Activated naive CD4-positive, alpha-beta T cell treated with anti-CD3 and anti-CD28 coated beads for 36 hours (primary cell): ENCODE measurements at regions of chr1 and their contacts with region 1.

Region 1: DNA sequence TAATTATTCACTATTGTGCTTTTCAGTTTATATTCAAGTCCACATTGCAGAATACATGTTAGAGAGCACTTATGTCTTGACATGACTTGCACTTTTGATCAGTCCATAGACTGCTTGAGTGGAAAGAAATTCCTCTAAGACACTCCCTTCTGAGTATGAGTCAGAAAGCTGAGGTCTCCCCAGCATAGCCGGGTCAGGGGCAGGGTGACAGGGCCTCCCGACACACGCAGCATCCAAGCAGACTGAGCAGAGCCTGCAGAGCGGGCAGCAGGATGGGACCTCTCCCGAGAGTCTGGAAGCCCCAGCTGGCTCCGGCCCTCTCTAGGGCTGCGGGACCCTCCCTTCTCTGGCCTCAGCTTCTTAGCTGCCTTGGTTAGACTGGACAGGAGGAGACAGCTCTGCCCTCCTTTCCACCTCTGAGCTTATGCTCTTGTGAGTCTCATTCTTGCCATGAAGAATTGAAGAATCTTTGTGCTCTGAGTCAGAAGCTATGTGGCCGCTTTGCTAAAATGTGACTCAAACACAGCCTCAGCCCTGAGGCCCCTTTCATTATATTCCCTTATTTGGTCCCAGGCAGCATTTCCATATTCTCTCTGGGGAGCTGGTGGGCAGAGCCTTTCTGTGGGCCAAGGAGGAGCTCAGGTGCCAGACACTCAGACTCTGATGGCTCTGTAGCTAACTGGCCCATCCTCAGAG is 11.2 kb upstream of the CAPN2 start:
- DNase-seq: peak; percentile 29
- H3K4me3 Mint-ChIP-seq: no peak overlapping the region
- H3K27ac Mint-ChIP-seq: no peak overlapping the region
- H3K4me1 Mint-ChIP-seq: peaks cover 29% of the 10 kb centered on the region
- H3K27me3 Mint-ChIP-seq: no peaks in the 10 kb centered on the region

Region 2: DNA sequence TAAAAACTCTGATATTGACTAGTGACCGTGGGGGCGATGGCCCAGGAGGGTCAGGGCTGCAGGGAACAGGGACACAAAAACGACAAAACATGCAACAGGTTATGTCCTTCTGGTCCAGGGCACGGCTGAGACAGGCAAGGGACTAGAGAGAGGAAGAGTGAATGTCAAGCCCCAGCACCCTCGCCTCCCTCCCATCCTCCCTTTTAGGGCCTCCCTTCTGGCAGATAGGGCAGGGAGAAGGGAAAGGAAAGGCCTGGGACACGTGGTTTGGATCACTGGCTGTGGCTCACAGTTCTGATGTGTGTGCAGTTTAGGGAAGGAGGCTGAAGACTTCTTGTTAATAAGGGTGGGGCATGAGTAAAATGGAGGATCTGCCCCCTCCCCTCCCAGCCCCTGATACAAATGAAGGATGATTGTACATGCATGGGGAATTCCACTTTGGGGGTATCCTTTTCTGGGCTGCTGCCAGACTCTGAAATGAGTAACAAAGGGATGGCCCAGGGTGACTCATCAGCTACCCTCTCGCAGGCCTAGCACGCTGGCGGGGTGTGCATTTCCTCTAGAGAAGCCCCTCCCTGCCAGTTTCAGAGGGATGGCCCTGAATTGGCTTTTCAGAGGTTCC is 25.4 kb after region 1 on chr1:
- CTCF ChIA-PET with region 1: interaction called, 7 read pairs
- intact Hi-C with region 1: loop called (anchors 1 kb)
- DNase-seq: peak; percentile 98
- H3K4me3 Mint-ChIP-seq: peak overlapping the region; percentile 52
- H3K27ac Mint-ChIP-seq: peak overlapping the region; percentile 65
- H3K4me1 Mint-ChIP-seq: peaks cover 57% of the 10 kb centered on the region
- H3K27me3 Mint-ChIP-seq: no peaks in the 10 kb centered on the region

Region 3: DNA sequence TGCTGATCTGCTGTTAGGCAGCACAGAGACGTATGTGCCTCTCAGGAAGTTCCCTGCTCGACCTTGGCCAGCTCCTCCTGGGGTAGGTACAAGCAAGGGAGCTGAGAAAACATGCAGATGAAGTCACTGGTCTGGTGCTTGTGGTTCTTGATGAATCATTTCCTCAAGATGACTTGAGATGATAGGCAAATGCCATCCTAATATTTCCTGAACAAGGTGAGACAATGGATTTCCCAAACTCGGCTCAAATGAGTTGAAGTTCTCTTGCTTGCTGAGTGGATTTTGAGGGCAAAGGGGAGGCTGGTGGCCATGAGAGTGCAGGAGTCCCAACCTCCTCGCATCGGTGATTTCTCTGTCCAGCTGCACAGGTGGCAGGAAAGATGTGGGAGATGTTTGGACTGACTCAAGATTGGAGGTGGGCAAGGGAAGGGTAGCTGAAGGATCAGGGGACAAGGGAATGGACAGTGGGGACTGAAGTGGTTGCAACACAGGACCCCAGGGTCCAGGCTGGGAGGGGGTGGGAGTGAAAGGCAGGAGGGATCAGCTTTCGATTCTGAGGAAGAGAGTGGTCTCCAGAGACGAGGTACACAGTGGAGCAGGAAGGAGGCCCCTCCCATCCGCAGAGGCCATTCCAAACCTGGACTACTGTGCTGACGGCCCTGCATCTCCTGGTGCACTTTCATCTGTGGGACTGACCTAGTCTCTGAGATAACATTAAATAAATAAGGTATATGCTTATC is 75.2 kb after region 1 on chr1:
- CTCF ChIA-PET with region 1: interaction called, 10 read pairs
- intact Hi-C with region 1: loop called (anchors 2 kb)
- DNase-seq: peak; percentile 83
- H3K4me3 Mint-ChIP-seq: peak overlapping the region; percentile 10
- H3K27ac Mint-ChIP-seq: peak overlapping the region; percentile 86
- H3K4me1 Mint-ChIP-seq: peaks cover 41% of the 10 kb centered on the region
- H3K27me3 Mint-ChIP-seq: no peaks in the 10 kb centered on the region

Region 4: DNA sequence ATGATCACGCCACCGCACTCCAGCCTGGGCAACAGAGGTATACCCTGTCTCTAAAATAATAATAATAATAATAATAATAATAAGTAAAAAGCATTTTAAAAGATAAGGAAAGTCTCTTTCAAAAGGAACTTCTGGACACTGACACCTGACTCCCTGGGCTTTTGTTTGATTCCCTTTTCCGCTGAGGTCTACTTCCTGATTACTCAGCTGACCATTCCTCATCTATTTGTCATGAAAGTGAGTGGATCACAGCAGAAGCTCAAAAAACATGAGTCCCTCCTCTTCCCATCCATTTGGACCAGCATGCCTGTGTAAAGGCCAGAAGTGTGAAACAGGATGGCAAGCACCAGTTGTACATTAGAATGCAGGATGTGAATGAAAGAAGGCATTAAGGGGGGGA is 351.7 kb after region 1 on chr1:
- CTCF ChIA-PET with region 1: interaction called, 5 read pairs
- intact Hi-C with region 1: loop called (anchors 1 kb)
- DNase-seq: no peak
- H3K4me3 Mint-ChIP-seq: no peak overlapping the region
- H3K27ac Mint-ChIP-seq: no peak overlapping the region
- H3K4me1 Mint-ChIP-seq: peaks cover 4% of the 10 kb centered on the region
- H3K27me3 Mint-ChIP-seq: peaks cover 3% of the 10 kb centered on the region

Region 5: GRCh38 chr1:224329842-224330753 is 629.0 kb after region 1 on chr1 and contains the start of gene NVL:
- CTCF ChIA-PET with region 1: interaction called, 3 read pairs
- intact Hi-C with region 1: loop called (anchors 1 kb)
- DNase-seq: peak; percentile 89
- H3K4me3 Mint-ChIP-seq: peak within 1 kb of the TSS; percentile 98
- H3K27ac Mint-ChIP-seq: peak within 1 kb of the TSS; percentile 98
- H3K4me1 Mint-ChIP-seq: peaks cover 38% of the 10 kb centered on the region
- H3K27me3 Mint-ChIP-seq: no peaks in the 10 kb centered on the region
- total RNA-seq, gene NVL: 26.7 to 29.9 TPM

Region 6: DNA sequence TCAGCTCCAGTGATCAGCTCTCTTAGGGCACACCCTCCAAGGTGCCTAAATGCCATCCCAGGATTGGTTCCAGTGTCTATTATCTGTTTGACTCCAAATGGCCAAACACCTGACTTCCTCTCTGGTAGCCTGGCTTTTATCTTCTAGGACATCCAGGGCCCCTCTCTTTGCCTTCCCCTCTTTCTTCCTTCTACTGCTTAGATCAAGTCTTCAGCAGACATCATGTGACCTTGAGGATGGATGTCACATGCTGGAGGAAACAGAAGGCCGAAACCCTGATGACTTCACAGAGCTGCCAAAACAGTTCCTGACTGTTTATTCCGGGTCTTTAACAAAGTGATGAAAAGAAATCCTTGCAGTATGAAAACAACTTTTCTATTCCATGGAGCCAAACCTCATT is 757.9 kb after region 1 on chr1:
- CTCF ChIA-PET with region 1: interaction called, 3 read pairs
- intact Hi-C with region 1: loop called (anchors 1 kb)
- DNase-seq: no peak
- H3K4me3 Mint-ChIP-seq: no peak overlapping the region
- H3K27ac Mint-ChIP-seq: peak overlapping the region; percentile 41
- H3K4me1 Mint-ChIP-seq: peaks cover 13% of the 10 kb centered on the region
- H3K27me3 Mint-ChIP-seq: no peaks in the 10 kb centered on the region